Endothelial cell of umbilical vein (primary cell): ENCODE measurements at regions of chr9 and their contacts with region 1.

Region 1: DNA sequence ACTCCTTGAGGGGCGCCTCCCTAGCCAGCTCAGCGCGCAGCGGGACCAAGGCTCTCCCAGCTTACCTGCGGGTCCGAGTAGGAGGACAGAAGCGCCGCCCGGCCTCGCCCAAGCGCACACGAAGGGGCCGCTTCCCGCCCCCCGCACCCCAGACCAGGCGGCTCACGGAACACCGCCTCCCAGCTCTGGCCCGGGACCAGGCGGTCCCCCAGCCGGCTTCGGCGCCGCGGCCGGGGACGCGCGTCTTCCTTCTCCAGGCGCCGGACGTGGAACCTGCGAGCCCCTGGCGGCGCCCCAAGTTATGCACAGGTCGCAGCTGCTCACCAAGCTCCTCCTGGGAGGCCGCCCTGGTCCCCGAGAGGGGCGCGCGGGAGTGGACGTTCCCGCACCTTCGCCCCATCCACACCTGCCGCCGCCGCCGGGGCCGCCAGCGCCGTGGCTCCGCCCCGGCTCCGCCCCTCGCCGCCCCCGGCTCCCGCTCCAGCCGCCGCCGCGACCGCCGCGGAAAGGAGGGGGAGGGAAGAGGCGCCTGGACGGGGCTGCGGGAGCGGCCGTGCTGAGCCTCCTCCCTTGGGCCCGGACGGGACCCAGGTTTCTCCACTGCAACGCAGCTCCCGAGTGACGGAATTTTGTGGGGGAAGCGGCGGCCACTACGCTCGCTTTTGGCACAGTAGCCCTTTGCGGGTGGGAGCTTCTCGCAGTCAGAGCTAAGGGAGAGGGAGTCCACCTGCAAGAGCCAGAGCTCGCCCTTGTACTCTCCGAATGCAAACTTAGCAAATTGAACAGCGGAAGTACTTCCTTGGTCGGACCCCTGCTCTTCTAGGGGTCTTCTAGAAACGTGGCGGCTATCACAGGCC is 77.5 kb upstream of the IFNE start:
- DNase-seq: peak; percentile 68
- H3K4me3 ChIP-seq: peak overlapping the region; percentile 78 to 97 (median 92)
- H3K27ac ChIP-seq: peak overlapping the region; percentile 81
- H3K4me1 ChIP-seq: peaks cover 24% of the 10 kb centered on the region
- H3K27me3 ChIP-seq: no peaks in the 10 kb centered on the region
- CTCF ChIP-seq: peak in 1 of 2 donors; percentile 14
- POLR2A ChIP-seq: peak; percentile 49

Region 2: DNA sequence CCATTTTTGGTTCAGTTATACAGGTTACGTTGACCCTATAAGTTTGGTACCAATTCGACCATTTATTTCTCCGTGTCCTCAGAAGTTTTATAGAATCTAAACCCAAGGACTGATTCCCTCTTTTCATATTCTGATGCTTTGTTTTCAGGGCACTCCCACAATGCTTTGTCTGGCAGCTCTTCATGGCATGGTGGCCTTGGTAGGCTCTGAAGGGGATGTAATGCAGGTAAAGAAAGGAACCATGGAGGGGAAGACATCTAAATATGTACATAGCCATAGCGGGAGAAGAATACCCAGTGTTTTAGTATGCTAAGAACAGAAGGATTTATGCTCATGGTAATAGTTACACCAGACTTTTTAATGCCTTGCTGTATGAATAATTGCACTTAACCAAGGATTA is 610.9 kb before region 1 on chr9:
- CTCF ChIA-PET with region 1: no interaction called
- POLR2A ChIA-PET with region 1: no interaction called
- dilution Hi-C with region 1: no loop called
- intact Hi-C with region 1: no loop called
- DNase-seq: no peak
- H3K4me3 ChIP-seq: no peak overlapping the region
- H3K27ac ChIP-seq: no peak overlapping the region
- H3K4me1 ChIP-seq: no peaks in the 10 kb centered on the region
- H3K27me3 ChIP-seq: no peaks in the 10 kb centered on the region
- CTCF ChIP-seq: no peak
- POLR2A ChIP-seq: no peak

Region 3: GRCh38 chr9:21317956-21318923 is 241.4 kb before region 1 on chr9:
- CTCF ChIA-PET with region 1: interaction called, 7 read pairs
- POLR2A ChIA-PET with region 1: no interaction called
- dilution Hi-C with region 1: no loop called
- intact Hi-C with region 1: loop called (anchors 5 kb)
- DNase-seq: peak; percentile 76
- H3K4me3 ChIP-seq: no peak overlapping the region
- H3K27ac ChIP-seq: peak overlapping the region; percentile 20
- H3K4me1 ChIP-seq: peaks cover 13% of the 10 kb centered on the region
- H3K27me3 ChIP-seq: peaks cover 10 to 22% of the 10 kb centered on the region in 2 experiments
- CTCF ChIP-seq: peak; percentile 37 to 61
- POLR2A ChIP-seq: no peak

Region 4: GRCh38 chr9:21465859-21466518 is 93.7 kb before region 1 on chr9:
- CTCF ChIA-PET with region 1: interaction called, 27 read pairs
- POLR2A ChIA-PET with region 1: no interaction called
- dilution Hi-C with region 1: no loop called
- intact Hi-C with region 1: loop called (anchors 2 kb)
- DNase-seq: peak; percentile 88
- H3K4me3 ChIP-seq: no peak overlapping the region
- H3K27ac ChIP-seq: no peak overlapping the region
- H3K4me1 ChIP-seq: no peaks in the 10 kb centered on the region
- H3K27me3 ChIP-seq: no peaks in the 10 kb centered on the region
- CTCF ChIP-seq: peak; percentile 62 to 63
- POLR2A ChIP-seq: no peak

Region 5: GRCh38 chr9:21506626-21507484 is 52.8 kb before region 1 on chr9:
- CTCF ChIA-PET with region 1: interaction called, 4 read pairs
- POLR2A ChIA-PET with region 1: no interaction called
- dilution Hi-C with region 1: no loop called
- intact Hi-C with region 1: loop called (anchors 2 kb)
- DNase-seq: peak; percentile 79
- H3K4me3 ChIP-seq: no peak overlapping the region
- H3K27ac ChIP-seq: peak overlapping the region; percentile 19
- H3K4me1 ChIP-seq: peaks cover 29% of the 10 kb centered on the region
- H3K27me3 ChIP-seq: no peaks in the 10 kb centered on the region
- CTCF ChIP-seq: no peak
- POLR2A ChIP-seq: no peak

Region 6: GRCh38 chr9:21570643-21571275 is 11.1 kb after region 1 on chr9:
- CTCF ChIA-PET with region 1: interaction called, 12 read pairs
- POLR2A ChIA-PET with region 1: interaction called, 3 read pairs
- dilution Hi-C with region 1: no loop called
- intact Hi-C with region 1: no loop called
- DNase-seq: no peak
- H3K4me3 ChIP-seq: no peak overlapping the region
- H3K27ac ChIP-seq: no peak overlapping the region
- H3K4me1 ChIP-seq: peaks cover 2% of the 10 kb centered on the region
- H3K27me3 ChIP-seq: no peaks in the 10 kb centered on the region
- CTCF ChIP-seq: no peak
- POLR2A ChIP-seq: no peak

Region 7: GRCh38 chr9:21688108-21689102 is 128.8 kb after region 1 on chr9:
- CTCF ChIA-PET with region 1: interaction called, 5 read pairs
- POLR2A ChIA-PET with region 1: no interaction called
- dilution Hi-C with region 1: loop called (anchors 10 kb)
- intact Hi-C with region 1: loop called (anchors 1 kb)
- DNase-seq: peak; percentile 83
- H3K4me3 ChIP-seq: no peak overlapping the region
- H3K27ac ChIP-seq: peak overlapping the region; percentile 70
- H3K4me1 ChIP-seq: peaks cover 61% of the 10 kb centered on the region
- H3K27me3 ChIP-seq: no peaks in the 10 kb centered on the region
- CTCF ChIP-seq: no peak
- POLR2A ChIP-seq: no peak

Region 8: DNA sequence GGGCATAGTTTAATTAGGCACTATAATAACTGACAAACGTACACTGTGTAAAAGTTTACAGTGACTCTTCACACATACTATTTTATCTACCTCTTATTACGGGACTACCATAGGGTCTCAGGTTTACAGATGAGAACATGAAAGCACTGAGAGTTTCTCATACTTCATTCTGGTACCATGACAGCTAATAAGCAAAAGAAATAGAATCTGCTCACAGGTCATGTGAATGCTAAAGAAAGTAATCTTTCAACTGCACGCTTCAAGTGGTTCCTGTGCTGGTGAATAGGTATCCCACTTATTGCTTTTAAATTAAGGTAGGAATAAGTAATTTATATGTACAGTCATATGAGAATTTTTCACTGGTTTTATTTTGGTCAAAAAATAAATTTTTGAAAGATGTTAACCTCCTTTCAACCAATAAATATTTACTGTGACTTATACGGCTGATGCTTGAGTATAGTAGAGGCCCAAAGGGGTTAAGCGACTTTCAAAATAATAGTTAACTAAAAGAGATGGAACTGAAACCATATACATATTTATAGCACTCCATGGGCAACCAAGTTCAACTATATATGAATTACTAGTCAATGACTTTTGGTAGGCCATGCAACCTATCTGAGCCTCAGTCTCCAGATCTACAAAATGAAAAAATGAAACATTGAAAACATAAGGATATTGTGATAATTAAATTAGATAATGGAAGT is 426.5 kb after region 1 on chr9:
- CTCF ChIA-PET with region 1: no interaction called
- POLR2A ChIA-PET with region 1: no interaction called
- dilution Hi-C with region 1: no loop called
- intact Hi-C with region 1: loop called (anchors 5 kb)
- DNase-seq: no peak
- H3K4me3 ChIP-seq: no peak overlapping the region
- H3K27ac ChIP-seq: no peak overlapping the region
- H3K4me1 ChIP-seq: peaks cover 18% of the 10 kb centered on the region
- H3K27me3 ChIP-seq: peaks cover 29 to 92% of the 10 kb centered on the region in 2 experiments
- CTCF ChIP-seq: no peak
- POLR2A ChIP-seq: no peak